ENCODE measurements at regions of chr3 and their contacts with region 1.

Region 1: GRCh38 chr3:48400824-48401433 is 28.9 kb downstream of the FBXW12 start:
- DNase-seq: peak; percentile 76
- ATAC-seq: peak; percentile 88
- H3K4me3 Mint-ChIP-seq: no peak overlapping the region
- H3K27ac Mint-ChIP-seq: no peak overlapping the region
- H3K4me1 Mint-ChIP-seq: peaks cover 2% of the 10 kb centered on the region
- H3K27me3 Mint-ChIP-seq: peaks cover under 1% of the 10 kb centered on the region

Region 2: DNA sequence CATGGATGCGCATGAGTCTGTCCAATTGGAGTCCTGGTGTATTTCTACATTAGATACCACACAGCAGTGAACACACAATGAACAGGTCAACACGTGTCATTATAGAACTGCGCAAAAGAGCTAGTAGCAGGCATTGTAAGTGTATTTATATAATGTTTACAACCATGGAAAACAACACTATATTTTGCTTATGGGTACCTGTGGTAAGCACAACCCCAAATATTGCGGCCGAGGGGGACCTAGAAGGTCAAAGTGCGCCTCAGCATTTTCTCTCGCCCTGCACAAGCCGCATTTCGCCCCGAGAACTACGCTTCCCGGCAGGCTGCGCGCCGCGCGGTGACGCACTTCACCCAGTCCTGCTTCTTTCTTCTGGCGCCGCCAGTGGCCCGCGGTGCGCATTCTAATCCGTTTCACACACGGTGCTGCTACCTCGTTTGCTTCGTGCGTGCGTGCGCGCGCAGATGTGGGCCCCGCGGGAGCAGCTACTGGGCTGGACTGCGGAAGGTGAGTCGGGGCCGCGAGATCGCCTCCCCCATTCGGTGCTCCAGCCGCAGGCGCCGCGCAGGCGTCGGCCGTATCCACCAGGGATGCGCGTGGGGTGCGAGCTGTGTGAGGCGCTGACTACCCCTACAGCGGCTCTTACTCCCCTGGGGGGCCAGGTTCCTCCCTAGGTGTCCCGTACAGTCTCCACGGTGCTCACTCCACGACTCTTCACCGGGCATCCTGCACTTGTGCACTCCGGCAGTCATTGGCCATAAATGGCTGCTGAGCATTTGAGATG is 160.0 kb before region 1 on chr3 and contains the start of gene ZNF589:
- CTCF ChIA-PET with region 1: interaction called, 17 read pairs
- POLR2A ChIA-PET with region 1: interaction called, 3 read pairs
- DNase-seq: peak; percentile 98
- ATAC-seq: peak; percentile 99
- H3K4me3 Mint-ChIP-seq: peak within 1 kb of the TSS; percentile 92
- H3K27ac Mint-ChIP-seq: peak within 1 kb of the TSS; percentile 96
- H3K4me1 Mint-ChIP-seq: peaks cover 29% of the 10 kb centered on the region
- H3K27me3 Mint-ChIP-seq: no peaks in the 10 kb centered on the region
- total RNA-seq, gene ZNF589: 29.7 to 30.3 TPM

Region 3: DNA sequence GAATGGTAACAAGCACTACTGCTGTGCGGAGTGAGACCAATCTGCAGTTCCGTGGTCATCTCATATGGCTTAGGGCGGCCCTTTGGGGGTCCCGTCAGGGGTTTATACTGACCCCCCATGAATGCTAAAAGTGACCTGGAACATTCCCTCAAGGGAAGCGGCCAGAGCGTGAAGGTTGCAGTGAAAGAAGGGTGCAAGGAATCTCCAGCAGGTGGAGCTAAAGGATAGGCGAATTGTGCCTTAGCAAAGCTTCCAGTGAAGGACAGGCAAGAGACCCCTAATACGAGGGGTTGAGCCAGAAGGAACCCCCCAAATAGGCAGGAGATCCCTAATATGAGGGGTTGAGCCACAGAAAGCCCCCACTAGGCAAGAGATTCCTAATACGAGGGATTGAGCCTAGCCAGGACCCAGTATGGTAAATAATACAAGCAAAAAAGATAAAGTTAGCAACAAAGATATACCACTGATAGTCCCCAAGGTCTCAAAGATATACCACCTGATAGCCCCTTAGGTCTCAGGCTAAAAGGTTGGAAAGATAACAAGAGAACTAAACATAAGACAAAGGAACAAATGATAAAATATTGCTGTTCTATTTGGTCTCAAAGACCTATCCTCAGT is 127.2 kb before region 1 on chr3:
- CTCF ChIA-PET with region 1: interaction called, 29 read pairs
- POLR2A ChIA-PET with region 1: interaction called, 4 read pairs
- DNase-seq: peak; percentile 72
- ATAC-seq: peak; percentile 44
- H3K4me3 Mint-ChIP-seq: no peak overlapping the region
- H3K27ac Mint-ChIP-seq: no peak overlapping the region
- H3K4me1 Mint-ChIP-seq: peaks cover 20% of the 10 kb centered on the region
- H3K27me3 Mint-ChIP-seq: no peaks in the 10 kb centered on the region

Region 4: DNA sequence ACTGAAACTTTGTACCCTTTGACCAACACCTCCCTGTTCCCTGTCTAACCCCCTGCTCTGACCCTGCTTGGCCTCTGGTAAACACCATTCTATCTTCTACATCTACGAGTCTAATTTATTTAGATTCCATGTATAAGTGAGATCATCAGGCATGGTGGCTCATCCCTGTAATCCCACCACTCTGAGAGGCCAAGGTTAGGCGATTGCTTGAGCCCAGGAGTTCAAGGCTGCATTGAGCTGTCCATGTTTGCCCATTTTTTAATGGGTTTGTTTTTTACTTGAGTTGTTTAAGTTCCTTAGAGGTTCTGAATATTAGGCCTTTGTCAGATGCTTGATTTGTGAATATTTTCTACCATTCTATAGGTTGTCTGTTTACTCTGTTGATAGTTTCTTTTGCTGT is 12.0 kb before region 1 on chr3:
- CTCF ChIA-PET with region 1: interaction called, 14 read pairs
- POLR2A ChIA-PET with region 1: no interaction called
- DNase-seq: no peak
- ATAC-seq: no peak
- H3K4me3 Mint-ChIP-seq: no peak overlapping the region
- H3K27ac Mint-ChIP-seq: no peak overlapping the region
- H3K4me1 Mint-ChIP-seq: no peaks in the 10 kb centered on the region
- H3K27me3 Mint-ChIP-seq: peaks cover 54% of the 10 kb centered on the region

Region 5: GRCh38 chr3:48514436-48515227 is 113.7 kb after region 1 on chr3:
- CTCF ChIA-PET with region 1: interaction called, 45 read pairs
- POLR2A ChIA-PET with region 1: no interaction called
- DNase-seq: peak; percentile 77
- ATAC-seq: peak; percentile 73
- H3K4me3 Mint-ChIP-seq: peak overlapping the region; percentile 43
- H3K27ac Mint-ChIP-seq: peak overlapping the region; percentile 75
- H3K4me1 Mint-ChIP-seq: peaks cover 65% of the 10 kb centered on the region
- H3K27me3 Mint-ChIP-seq: peaks cover 6% of the 10 kb centered on the region

Region 6: GRCh38 chr3:48532271-48532976 is 131.5 kb after region 1 on chr3:
- CTCF ChIA-PET with region 1: no interaction called
- POLR2A ChIA-PET with region 1: no interaction called
- DNase-seq: no peak
- ATAC-seq: no peak
- H3K4me3 Mint-ChIP-seq: no peak overlapping the region
- H3K27ac Mint-ChIP-seq: no peak overlapping the region
- H3K4me1 Mint-ChIP-seq: peaks cover 10% of the 10 kb centered on the region
- H3K27me3 Mint-ChIP-seq: no peaks in the 10 kb centered on the region

Region 7: GRCh38 chr3:48556793-48557626 is 156.1 kb after region 1 on chr3 and contains the start of gene PFKFB4:
- CTCF ChIA-PET with region 1: interaction called, 179 read pairs
- POLR2A ChIA-PET with region 1: no interaction called
- DNase-seq: peak; percentile 100
- ATAC-seq: peak; percentile 92
- H3K4me3 Mint-ChIP-seq: peak within 1 kb of the TSS; percentile 85
- H3K27ac Mint-ChIP-seq: peak within 1 kb of the TSS; percentile 83
- H3K4me1 Mint-ChIP-seq: peaks cover 66% of the 10 kb centered on the region
- H3K27me3 Mint-ChIP-seq: peaks cover 3% of the 10 kb centered on the region
- total RNA-seq, gene PFKFB4: 42.8 to 49.1 TPM

Measured in activated CD8-positive, alpha-beta T cell treated with anti-CD3 and anti-CD28 coated beads, Interleukin-2, amount 10 ng/mL, durations not matched to agents 7 days and 5 days (primary cell).